Calu3 (cell line): ENCODE measurements at regions of chr7 and their contacts with region 1.

Region 1: DNA sequence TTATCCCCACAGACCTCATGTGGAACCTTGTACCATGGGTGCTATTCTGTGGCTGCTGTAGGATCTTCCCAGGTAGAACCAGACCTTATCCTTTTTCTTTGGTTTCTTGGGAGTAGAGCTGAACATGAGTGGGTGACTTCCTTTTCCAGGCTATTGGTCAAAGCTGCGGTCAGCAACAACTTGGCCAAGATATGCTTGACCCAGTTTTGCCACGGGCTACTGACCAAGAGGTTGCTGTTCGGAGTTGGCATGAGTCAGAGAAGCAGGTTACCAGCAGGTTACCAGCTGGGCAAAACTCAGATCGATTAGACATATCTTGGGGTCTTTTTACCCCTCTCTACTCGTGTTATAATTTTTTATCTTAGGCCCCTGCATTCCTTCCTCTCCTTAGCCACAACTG is 36.7 kb upstream of the HDAC9 start:
- DNase-seq: peak; percentile 71
- H3K4me3 Mint-ChIP-seq: peak overlapping the region; percentile 51
- H3K27ac Mint-ChIP-seq: peak overlapping the region; percentile 80
- H3K4me1 Mint-ChIP-seq: peaks cover 31% of the 10 kb centered on the region
- H3K27me3 Mint-ChIP-seq: no peaks in the 10 kb centered on the region
- CTCF ChIP-seq: no peak

Region 2: DNA sequence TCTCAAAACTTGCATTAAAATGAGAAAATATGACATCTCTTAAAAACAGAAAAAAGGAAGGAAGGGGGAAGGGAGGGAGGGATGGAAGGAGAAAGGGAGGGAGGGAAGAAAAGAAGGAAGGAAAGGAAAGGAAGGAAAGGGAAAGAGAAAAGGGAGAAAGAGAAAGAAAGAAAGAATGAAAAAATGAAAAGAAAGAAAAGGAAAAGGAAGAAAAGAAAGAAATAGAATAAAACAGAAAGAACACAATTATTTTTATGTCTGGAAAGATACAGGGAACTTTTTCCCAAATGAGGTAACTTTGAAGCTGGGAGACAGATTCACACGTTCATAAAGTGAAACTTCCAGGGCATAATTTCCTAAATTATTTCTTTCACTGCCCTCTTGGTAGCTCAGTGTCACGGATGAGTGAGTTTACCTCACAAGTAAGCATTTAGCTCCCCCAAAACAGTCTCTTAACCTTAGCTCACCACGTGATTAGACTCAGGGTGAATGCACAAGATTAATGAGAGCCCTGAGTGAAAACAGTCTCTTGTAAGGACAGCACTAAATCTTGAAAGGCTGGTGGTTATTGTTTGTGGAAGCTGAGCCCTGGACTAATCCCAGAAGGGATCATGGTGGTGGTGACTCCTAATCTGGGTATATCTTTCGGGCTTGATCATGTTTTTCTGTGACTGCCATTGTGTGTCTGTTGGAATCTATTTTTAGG is 37.4 kb before region 1 on chr7:
- CTCF ChIA-PET with region 1: no interaction called
- intact Hi-C with region 1: loop called (anchors 2 kb)
- DNase-seq: no peak
- H3K4me3 Mint-ChIP-seq: no peak overlapping the region
- H3K27ac Mint-ChIP-seq: no peak overlapping the region
- H3K4me1 Mint-ChIP-seq: peaks cover 10% of the 10 kb centered on the region
- H3K27me3 Mint-ChIP-seq: no peaks in the 10 kb centered on the region
- CTCF ChIP-seq: no peak

Region 3: GRCh38 chr7:18481776-18482175 is 22.9 kb after region 1 on chr7:
- CTCF ChIA-PET with region 1: interaction called, 6 read pairs
- intact Hi-C with region 1: loop called (anchors 2 kb)
- DNase-seq: no peak
- H3K4me3 Mint-ChIP-seq: no peak overlapping the region
- H3K27ac Mint-ChIP-seq: peak overlapping the region; percentile 5
- H3K4me1 Mint-ChIP-seq: peaks cover 19% of the 10 kb centered on the region
- H3K27me3 Mint-ChIP-seq: no peaks in the 10 kb centered on the region
- CTCF ChIP-seq: no peak